Motor neuron (in vitro differentiated cells): ENCODE measurements at regions of chr5 and their contacts with region 1.

Region 1: DNA sequence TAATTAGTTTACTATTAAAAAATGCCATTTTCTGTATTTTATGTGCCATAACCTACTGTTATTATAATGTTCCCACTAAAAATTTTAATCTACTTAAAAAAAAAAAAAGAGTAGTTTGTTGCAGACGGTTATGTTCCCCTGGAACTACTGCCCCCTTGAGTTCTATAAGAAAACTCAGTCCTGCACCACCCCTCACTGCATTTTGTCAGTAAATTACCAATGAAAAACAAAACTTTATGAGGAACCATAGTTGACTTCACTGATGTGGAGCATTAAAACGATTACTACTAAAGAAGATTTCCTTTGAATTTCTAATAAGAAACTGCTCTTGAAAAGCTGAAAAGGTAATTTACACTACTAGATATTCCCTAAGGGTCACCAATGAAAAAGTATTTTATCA is 288.7 kb downstream of the FBXL17 start:
- ATAC-seq: peak in 3 of 8 experiments; percentile 33 to 58 (median 57)
- H3K4me3 ChIP-seq: no peak overlapping the region
- H3K27ac ChIP-seq: no peak overlapping the region
- H3K4me1 ChIP-seq: peaks cover 0 to 3% of the 10 kb centered on the region in 2 donors

Region 2: GRCh38 chr5:107023732-107024131 is 1069.5 kb before region 1 on chr5:
- in situ Hi-C with region 1: no loop called
- ATAC-seq: no peak
- H3K4me3 ChIP-seq: no peak overlapping the region
- H3K27ac ChIP-seq: no peak overlapping the region
- H3K4me1 ChIP-seq: peaks cover 0 to 15% of the 10 kb centered on the region in 2 donors

Region 3: GRCh38 chr5:107698286-107698685 is 394.9 kb before region 1 on chr5:
- in situ Hi-C with region 1: loop called in 1 of 9 experiments (anchors 25 kb)
- ATAC-seq: no peak
- H3K4me3 ChIP-seq: no peak overlapping the region
- H3K27ac ChIP-seq: no peak overlapping the region
- H3K4me1 ChIP-seq: peaks cover 8 to 11% of the 10 kb centered on the region in 2 donors

Region 4: DNA sequence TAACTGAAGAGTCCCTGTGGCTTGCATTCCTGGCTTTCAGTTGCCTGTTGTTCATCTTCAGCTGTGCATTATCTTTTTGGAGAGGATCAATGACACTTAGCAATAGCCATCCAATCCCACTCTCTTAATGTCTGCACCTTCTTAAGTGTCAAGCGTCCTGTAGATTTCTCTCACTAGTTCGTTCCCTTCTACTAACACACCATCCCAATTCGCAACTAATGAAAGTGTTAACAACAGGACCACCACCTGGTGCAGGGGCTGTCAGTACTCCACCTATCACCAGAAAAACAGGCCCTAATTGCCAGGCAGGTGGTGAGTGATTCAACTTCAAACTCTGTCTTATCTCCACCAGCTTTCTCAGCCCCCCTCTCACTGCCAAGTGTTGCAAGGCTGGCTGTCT is 253.0 kb before region 1 on chr5:
- in situ Hi-C with region 1: no loop called
- ATAC-seq: no peak
- H3K4me3 ChIP-seq: no peak overlapping the region
- H3K27ac ChIP-seq: no peak overlapping the region
- H3K4me1 ChIP-seq: no peaks in the 10 kb centered on the region

Region 5: GRCh38 chr5:107869438-107870115 is 223.6 kb before region 1 on chr5:
- in situ Hi-C with region 1: loop called in 1 of 9 experiments (anchors 25 kb)
- ATAC-seq: peak; percentile 42 to 84 (median 71)
- H3K4me3 ChIP-seq: no peak overlapping the region
- H3K27ac ChIP-seq: no peak overlapping the region
- H3K4me1 ChIP-seq: peaks cover 32 to 46% of the 10 kb centered on the region in 2 donors